B cell (primary cell): ENCODE measurements at regions of chr16 and their contacts with region 1.

Region 1: GRCh38 chr16:58733671-58734458 is at the start of gene GOT2:
- DNase-seq: peak; percentile 84
- ATAC-seq: peak; percentile 98
- H3K4me3 ChIP-seq: peak within 1 kb of the TSS; percentile 58 to 96 (median 66)
- H3K4me3 Mint-ChIP-seq: peak within 1 kb of the TSS; percentile 98
- H3K27ac ChIP-seq: peak within 1 kb of the TSS in 1 of 2 donors; percentile 79
- H3K27ac Mint-ChIP-seq: peak within 1 kb of the TSS; percentile 68
- H3K4me1 ChIP-seq: peaks cover 20 to 23% of the 10 kb centered on the region in 2 donors
- H3K4me1 Mint-ChIP-seq: peaks cover 42% of the 10 kb centered on the region
- H3K27me3 ChIP-seq: peaks cover 0 to under 1% (median 0%) of the 10 kb centered on the region in 4 experiments
- H3K27me3 Mint-ChIP-seq: peaks cover 1% of the 10 kb centered on the region
- CTCF ChIP-seq: peak; percentile 93
- total RNA-seq, gene GOT2: 31.2 and 33.6 TPM in 2 replicates

Region 2: GRCh38 chr16:58392215-58393137 is 341.4 kb before region 1 on chr16 and contains the start of gene GINS3:
- CTCF ChIA-PET with region 1: no interaction called
- POLR2A ChIA-PET with region 1: no interaction called
- intact Hi-C with region 1: loop called (anchors 5 kb)
- DNase-seq: peak; percentile 87
- ATAC-seq: peak; percentile 95
- H3K4me3 ChIP-seq: peak within 1 kb of the TSS; percentile 42 to 99 (median 78)
- H3K4me3 Mint-ChIP-seq: peak within 1 kb of the TSS; percentile 93
- H3K27ac ChIP-seq: peak within 1 kb of the TSS; percentile 66 to 75
- H3K27ac Mint-ChIP-seq: peak within 1 kb of the TSS; percentile 86
- H3K4me1 ChIP-seq: peaks cover 6 to 11% of the 10 kb centered on the region in 2 donors
- H3K4me1 Mint-ChIP-seq: peaks cover 16% of the 10 kb centered on the region
- H3K27me3 ChIP-seq: no peaks in the 10 kb centered on the region
- H3K27me3 Mint-ChIP-seq: peaks cover 4% of the 10 kb centered on the region
- CTCF ChIP-seq: no peak
- total RNA-seq, gene GINS3: 2.3 and 2.9 TPM in 2 replicates

Region 3: GRCh38 chr16:58629572-58630104 is 104.2 kb before region 1 on chr16 and contains the start of gene CNOT1:
- CTCF ChIA-PET with region 1: no interaction called
- POLR2A ChIA-PET with region 1: interaction called, 3 read pairs
- intact Hi-C with region 1: loop called (anchors 1 kb)
- DNase-seq: no peak
- ATAC-seq: peak; percentile 80
- H3K4me3 ChIP-seq: peak within 1 kb of the TSS; percentile 54 to 100 (median 100)
- H3K4me3 Mint-ChIP-seq: peak within 1 kb of the TSS; percentile 93
- H3K27ac ChIP-seq: peak within 1 kb of the TSS; percentile 99 to 100
- H3K27ac Mint-ChIP-seq: peak within 1 kb of the TSS; percentile 97
- H3K4me1 ChIP-seq: peaks cover 19 to 26% of the 10 kb centered on the region in 2 donors
- H3K4me1 Mint-ChIP-seq: peaks cover 40% of the 10 kb centered on the region
- H3K27me3 ChIP-seq: no peaks in the 10 kb centered on the region
- H3K27me3 Mint-ChIP-seq: no peaks in the 10 kb centered on the region
- CTCF ChIP-seq: no peak
- total RNA-seq, gene CNOT1: 246 and 268 TPM in 2 replicates

Region 4: GRCh38 chr16:58684354-58685083 is 49.3 kb before region 1 on chr16 and contains the start of gene SLC38A7:
- CTCF ChIA-PET with region 1: interaction called, 3 read pairs
- POLR2A ChIA-PET with region 1: no interaction called
- intact Hi-C with region 1: loop called (anchors 5 kb)
- DNase-seq: peak; percentile 81
- ATAC-seq: peak; percentile 89
- H3K4me3 ChIP-seq: peak within 1 kb of the TSS; percentile 30 to 98 (median 74)
- H3K4me3 Mint-ChIP-seq: peak within 1 kb of the TSS; percentile 93
- H3K27ac ChIP-seq: peak within 1 kb of the TSS; percentile 11 to 80
- H3K27ac Mint-ChIP-seq: peak within 1 kb of the TSS; percentile 80
- H3K4me1 ChIP-seq: peaks cover 10 to 17% of the 10 kb centered on the region in 2 donors
- H3K4me1 Mint-ChIP-seq: peaks cover 17% of the 10 kb centered on the region
- H3K27me3 ChIP-seq: no peaks in the 10 kb centered on the region
- H3K27me3 Mint-ChIP-seq: peaks cover 1% of the 10 kb centered on the region
- CTCF ChIP-seq: no peak
- total RNA-seq, gene SLC38A7: 18.0 and 23.9 TPM in 2 replicates